ENCODE measurements at regions of chr9 and their contacts with region 1.

Region 1: DNA sequence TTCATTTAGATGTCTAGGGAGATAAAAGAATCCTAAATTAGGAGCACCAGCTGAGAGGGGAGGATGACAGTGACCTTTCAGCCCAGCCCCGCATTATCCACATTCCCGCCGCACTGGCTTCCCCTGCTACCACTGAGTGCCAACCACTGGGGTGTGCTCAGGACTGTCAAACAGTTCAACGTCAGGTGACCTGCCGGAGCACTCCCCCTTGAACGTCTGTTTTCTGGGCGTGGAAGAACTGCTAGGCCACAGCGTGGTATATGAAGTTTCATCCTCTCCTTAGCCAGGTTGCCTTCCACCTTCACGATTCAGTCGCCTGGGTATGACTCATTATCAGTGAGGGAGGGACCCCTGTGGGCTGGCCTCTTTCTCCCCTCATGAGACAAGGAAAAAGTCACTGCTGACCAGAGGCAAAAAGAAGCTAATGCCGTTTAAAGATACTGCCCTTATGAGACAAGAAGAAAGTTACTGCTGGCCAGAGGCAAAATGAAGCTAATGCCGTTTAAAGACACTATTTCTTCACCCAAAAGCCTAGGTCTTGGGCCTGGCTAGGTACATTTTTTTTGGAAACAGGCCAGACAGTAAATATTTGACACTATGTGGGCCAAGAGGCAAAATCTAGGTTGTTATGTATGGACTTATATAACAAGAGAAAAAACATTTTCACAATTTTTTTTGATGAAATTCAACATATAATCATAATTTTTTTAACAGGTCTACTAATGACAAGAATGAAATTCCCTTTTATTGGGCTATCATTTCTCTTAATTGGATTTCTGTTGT is 4.6 kb downstream of the NMRK1 start:
- DNase-seq: no peak
- H3K4me3 ChIP-seq: no peak overlapping the region
- H3K27ac ChIP-seq: peak overlapping the region in 6 of 8 donors; percentile 6 to 52 (median 20)
- H3K4me1 ChIP-seq: peaks cover 15 to 51% (median 32%) of the 10 kb centered on the region in 6 donors
- H3K27me3 ChIP-seq: no peaks in the 10 kb centered on the region
- CTCF ChIP-seq: peak in 1 of 11 experiments; percentile 4
- POLR2A ChIP-seq: no peak

Region 2: DNA sequence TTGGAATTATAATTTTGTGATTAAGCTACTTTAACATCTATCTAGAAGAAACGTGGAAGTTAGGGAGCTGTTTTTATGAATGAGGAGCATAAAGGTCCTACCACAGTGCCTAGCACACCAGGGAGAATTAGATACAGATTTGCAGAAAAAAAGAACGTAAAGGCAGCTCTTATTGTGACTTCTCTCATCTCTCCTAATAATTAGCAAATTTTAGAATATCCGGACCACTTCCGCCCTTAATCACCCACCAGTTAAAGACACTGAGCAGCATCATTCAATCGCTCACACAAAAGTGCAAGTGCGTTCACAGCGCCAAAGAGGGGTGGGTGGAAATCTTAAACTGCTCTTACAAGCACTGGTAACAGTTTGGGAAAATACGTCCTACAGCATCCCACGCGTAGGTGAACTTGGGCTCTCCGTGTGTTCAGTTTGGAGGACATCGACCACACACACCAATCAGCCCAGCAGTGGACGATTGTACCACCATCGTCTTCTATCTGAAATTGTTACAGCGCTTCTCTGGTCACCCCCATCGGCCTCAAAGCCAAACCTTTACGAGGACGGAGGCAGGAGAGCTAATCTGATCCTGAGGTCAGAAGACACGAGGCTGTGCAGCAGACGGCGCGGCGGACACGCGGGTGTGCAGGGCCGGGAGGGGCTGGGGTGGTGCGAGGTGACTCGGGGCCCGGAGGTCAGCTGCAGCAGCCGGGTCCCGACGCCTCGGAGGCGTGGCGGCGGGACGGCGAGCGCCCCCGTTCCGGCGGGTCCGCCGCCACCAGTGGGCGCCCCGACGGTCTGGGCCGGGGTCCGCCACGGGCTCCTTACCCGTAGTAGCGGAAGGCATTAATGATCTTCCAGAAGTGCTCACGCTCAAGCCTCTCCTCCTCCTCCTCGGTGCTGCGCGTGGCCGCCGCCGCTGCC is 55.9 kb before region 1 on chr9:
- intact Hi-C with region 1: loop called (anchors 5 kb)
- DNase-seq: peak; percentile 93
- H3K4me3 ChIP-seq: peak overlapping the region; percentile 77 to 91 (median 84)
- H3K27ac ChIP-seq: peak overlapping the region; percentile 96 to 99 (median 98)
- H3K4me1 ChIP-seq: peaks cover 18 to 56% (median 35%) of the 10 kb centered on the region in 6 donors
- H3K27me3 ChIP-seq: no peaks in the 10 kb centered on the region
- CTCF ChIP-seq: no peak
- POLR2A ChIP-seq: no peak